ENCODE measurements at regions of chr18 and their contacts with region 1.

Region 1: GRCh38 chr18:48030616-48031480 is 100.4 kb upstream of the SMAD2 start:
- DNase-seq: peak; percentile 28 to 44 (median 38)
- ATAC-seq: peak; percentile 89
- H3K4me3 ChIP-seq: no peak overlapping the region
- H3K27ac ChIP-seq: no peak overlapping the region
- H3K4me1 ChIP-seq: peaks cover 0 to 6% of the 10 kb centered on the region in 2 experiments; a peak in 2 of 5 replicates
- H3K27me3 ChIP-seq: peaks cover 0 to 53% of the 10 kb centered on the region in 2 experiments; a peak in 2 of 5 replicates
- CTCF ChIP-seq: peak; percentile 47 to 64 (median 62)
- EP300 ChIP-seq: no peak
- POLR2A ChIP-seq: no peak
- RAD21 ChIP-seq: peak; percentile 39 to 64

Region 2: DNA sequence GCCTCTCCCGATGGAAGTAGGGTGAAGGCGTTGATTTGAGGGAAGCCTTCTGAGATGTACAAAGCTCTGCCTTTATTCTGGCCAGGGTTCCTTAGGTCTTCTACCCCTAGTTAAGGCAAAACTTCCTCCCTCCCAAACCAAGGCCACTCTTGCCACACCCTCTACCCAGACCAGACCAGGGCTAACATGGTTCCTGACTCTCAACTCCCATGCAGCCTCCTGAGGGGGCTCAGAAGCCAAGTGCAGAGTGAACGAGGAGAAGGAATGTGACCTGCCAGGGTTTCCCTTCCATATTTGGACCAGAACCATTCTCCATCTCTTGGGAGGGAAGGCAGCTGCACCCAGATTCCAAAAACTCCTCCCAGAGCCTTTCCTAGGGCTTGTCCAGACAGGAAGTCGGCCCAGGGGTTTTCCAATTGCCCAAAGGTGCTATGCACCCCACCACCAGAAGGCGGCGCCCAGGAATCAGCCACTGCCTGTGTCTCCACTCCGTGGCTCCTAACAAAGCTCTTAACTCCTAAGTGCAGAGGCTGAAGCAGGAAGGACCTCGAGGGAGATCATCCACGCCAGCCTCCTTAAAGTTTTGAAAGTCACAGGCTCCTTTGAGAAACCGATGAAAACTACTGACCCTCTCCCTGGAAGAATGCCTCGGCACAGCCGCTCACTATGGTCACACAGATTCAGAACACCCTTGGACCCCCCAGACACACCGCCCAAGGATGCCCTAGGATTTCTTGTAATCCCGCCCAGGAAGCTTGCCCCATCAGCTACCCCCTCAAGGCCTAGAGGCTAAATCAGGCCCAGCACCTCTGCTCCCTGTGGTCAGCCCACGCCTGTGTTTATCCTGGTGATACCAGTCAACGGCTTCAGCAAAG is 258.2 kb before region 1 on chr18:
- CTCF ChIA-PET with region 1: interaction called, 5 read pairs
- POLR2A ChIA-PET with region 1: no interaction called
- in situ Hi-C with region 1: loop called (anchors 5 kb)
- intact Hi-C with region 1: no loop called
- DNase-seq: peak; percentile 47 to 65 (median 52)
- ATAC-seq: peak; percentile 89
- H3K4me3 ChIP-seq: no peak overlapping the region
- H3K27ac ChIP-seq: no peak overlapping the region
- H3K4me1 ChIP-seq: no peaks in the 10 kb centered on the region
- H3K27me3 ChIP-seq: peaks cover 0 to 4% of the 10 kb centered on the region in 2 experiments; a peak in 2 of 5 replicates
- CTCF ChIP-seq: peak; percentile 80 to 85 (median 81)
- EP300 ChIP-seq: no peak
- POLR2A ChIP-seq: no peak
- RAD21 ChIP-seq: peak; percentile 54 to 86

Region 3: DNA sequence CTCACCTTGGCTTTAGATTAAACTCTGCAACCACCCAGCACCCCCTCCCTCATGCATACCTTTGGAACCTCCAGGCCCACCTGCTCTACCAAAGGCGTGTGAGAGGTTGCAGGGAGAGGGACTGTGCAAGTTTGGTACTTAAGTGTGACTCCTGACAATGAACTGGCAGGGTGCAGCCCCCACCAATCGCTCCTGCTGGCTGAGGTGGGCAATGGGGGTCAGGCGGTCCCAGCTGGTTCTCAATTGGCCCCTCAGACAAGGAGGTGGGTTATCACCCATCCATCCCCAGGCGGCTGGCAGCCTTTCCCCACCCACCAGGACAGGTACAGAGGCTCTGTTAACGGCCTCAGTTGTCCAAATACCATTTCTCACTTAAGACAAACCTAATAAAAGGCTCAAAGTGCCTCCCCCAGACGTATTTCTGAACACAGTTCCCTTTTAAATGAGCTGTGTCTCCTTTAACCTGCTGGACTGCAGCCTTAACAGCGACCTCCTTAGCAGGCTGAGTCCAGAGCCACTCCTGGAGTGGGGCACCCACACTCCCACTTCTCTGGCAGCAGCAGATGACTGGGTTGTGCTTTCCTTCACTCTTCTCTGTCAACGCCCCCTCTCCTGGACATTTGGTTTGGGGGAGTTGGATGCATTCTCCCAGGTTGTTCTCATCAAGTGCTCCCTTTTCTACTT is 68.8 kb after region 1 on chr18:
- CTCF ChIA-PET with region 1: interaction called, 3 read pairs
- POLR2A ChIA-PET with region 1: no interaction called
- in situ Hi-C with region 1: no loop called
- intact Hi-C with region 1: loop called (anchors 10 kb)
- DNase-seq: no peak
- ATAC-seq: no peak
- H3K4me3 ChIP-seq: no peak overlapping the region
- H3K27ac ChIP-seq: no peak overlapping the region
- H3K4me1 ChIP-seq: no peaks in the 10 kb centered on the region
- H3K27me3 ChIP-seq: peaks cover 0 to 10% of the 10 kb centered on the region in 2 experiments; a peak in 4 of 5 replicates
- CTCF ChIP-seq: no peak
- EP300 ChIP-seq: no peak
- POLR2A ChIP-seq: no peak
- RAD21 ChIP-seq: no peak

Region 4: DNA sequence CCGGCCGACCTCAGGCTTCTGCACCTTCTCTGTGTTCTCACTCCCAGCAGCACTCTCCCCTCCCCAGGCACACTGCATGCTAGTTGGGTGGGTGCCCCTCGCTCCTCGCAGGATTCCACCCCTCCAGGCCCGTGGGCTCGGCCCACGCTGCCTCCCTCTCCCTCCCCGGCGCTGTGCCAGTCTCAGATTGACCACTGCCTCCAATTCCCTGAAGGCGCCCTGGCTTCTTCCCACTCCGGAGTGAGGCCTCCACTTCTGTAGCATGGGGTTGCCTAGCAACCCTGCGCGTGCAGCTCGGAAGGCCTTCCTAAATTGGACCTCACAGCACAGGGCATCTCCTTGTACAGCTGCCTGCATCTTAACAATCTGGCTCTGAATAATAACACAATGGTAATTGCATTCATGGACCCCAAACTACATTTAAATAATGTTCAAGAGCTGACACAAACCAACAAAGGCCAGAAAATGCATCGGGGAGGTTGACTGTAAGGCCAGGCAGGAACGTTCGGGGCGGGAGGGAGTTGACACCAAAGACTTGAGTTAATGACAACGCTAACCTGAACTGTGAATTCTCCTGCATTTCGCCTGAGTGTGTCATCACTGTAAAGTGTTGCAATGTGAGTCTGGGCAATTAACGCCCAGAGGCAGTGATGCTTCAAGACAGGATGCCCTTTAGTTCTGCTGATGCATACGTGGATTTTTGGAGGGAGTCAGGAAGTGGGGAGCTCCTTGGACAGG is 155.4 kb after region 1 on chr18:
- CTCF ChIA-PET with region 1: no interaction called
- POLR2A ChIA-PET with region 1: no interaction called
- in situ Hi-C with region 1: no loop called
- intact Hi-C with region 1: no loop called
- DNase-seq: no peak
- ATAC-seq: no peak
- H3K4me3 ChIP-seq: no peak overlapping the region
- H3K27ac ChIP-seq: no peak overlapping the region
- H3K4me1 ChIP-seq: no peaks in the 10 kb centered on the region
- H3K27me3 ChIP-seq: peaks cover 0 to 20% of the 10 kb centered on the region in 2 experiments; a peak in 2 of 5 replicates
- CTCF ChIP-seq: no peak
- EP300 ChIP-seq: no peak
- POLR2A ChIP-seq: no peak
- RAD21 ChIP-seq: no peak